Activated naive CD4-positive, alpha-beta T cell treated with anti-CD3 and anti-CD28 coated beads, Interleukin-2, amount 10 ng/mL, durations not matched to agents 7 days and 5 days (primary cell): ENCODE measurements at regions of chr4 and their contacts with region 1.

Region 1: DNA sequence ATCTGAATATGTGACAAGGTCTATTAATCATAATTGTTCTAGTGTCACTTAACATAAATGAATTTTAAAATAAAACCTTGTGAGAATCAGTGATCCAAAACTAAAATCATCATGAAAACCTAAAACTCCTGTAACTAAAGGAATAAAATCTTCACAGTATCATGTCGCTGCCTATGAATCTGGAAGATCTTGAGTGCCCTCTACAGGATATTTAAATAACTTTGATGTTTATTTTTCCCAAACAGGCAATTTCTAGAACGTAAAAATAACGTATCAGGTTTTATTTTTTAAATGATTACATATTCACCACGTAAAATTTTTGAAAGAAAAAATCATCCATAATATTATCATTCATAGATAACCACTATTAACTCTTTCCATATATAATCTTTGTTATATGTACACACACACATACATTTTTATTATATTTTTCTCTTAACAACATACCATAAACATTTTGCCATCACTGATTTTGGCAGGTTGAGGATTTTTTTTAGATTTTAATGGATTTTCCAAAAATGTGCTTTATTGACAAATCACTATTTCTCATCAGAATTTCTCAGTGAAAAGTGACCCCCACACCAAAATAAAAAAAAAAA is 79.6 kb downstream of the COMMD8 start:
- DNase-seq: no peak
- H3K4me3 Mint-ChIP-seq: no peak overlapping the region
- H3K27ac Mint-ChIP-seq: no peak overlapping the region
- H3K4me1 Mint-ChIP-seq: no peaks in the 10 kb centered on the region
- H3K27me3 Mint-ChIP-seq: peaks cover 8% of the 10 kb centered on the region

Region 2: DNA sequence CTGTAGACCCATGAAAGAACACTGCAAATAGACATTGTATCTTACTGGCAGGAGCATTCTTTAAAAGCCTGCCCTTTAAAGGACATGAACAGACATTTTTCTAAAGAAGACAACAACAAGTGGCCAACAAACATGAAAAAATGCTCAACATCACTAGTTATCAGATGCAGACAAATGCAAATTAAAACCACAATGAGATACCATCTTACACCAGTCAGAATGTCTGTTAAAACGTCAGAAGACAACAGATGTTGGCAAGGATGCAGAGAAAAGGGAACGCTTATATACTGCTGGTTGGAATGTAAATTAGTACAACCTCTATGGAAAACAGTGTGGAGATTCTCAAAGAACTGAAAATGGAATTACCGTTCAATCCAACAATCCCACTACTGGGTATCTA is 178.4 kb after region 1 on chr4:
- CTCF ChIA-PET with region 1: interaction called, 10 read pairs
- DNase-seq: no peak
- H3K4me3 Mint-ChIP-seq: no peak overlapping the region
- H3K27ac Mint-ChIP-seq: no peak overlapping the region
- H3K4me1 Mint-ChIP-seq: peaks cover 4% of the 10 kb centered on the region
- H3K27me3 Mint-ChIP-seq: no peaks in the 10 kb centered on the region